Naive thymus-derived CD4-positive, alpha-beta T cell (primary cell): ENCODE measurements at regions of chr5 and their contacts with region 1.

Region 1: DNA sequence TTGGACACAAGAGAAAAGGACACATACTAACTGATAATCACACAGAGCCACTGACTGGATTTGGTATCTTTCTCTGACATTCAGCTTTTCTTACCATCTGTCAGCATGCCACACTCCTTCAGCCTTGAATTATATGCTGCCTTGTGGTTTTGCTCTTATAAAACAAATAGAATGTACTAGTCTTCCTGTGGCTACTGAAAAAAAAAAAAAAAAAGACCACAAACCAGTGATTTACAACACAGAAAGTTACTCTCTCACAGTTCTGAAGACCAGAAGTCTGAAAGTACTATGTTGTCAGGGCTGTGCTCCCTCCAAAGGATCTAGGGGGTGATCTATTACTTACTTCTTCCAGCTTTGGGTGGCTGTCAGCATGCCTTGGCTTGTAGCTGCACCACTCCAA is 82.3 kb downstream of the THBS4 start:
- DNase-seq: no peak
- ATAC-seq: no peak
- H3K4me3 ChIP-seq: no peak overlapping the region
- H3K4me3 Mint-ChIP-seq: peak overlapping the region in 7 of 10 donors; percentile 5 to 65 (median 48)
- H3K27ac ChIP-seq: no peak overlapping the region
- H3K27ac Mint-ChIP-seq: peak overlapping the region in 7 of 9 donors; percentile 29 to 90 (median 71)
- H3K4me1 ChIP-seq: peaks cover 8 to 17% of the 10 kb centered on the region in 2 donors
- H3K4me1 Mint-ChIP-seq: peaks cover 22 to 77% (median 68%) of the 10 kb centered on the region in 7 donors
- H3K27me3 ChIP-seq: no peaks in the 10 kb centered on the region
- H3K27me3 Mint-ChIP-seq: no peaks in the 10 kb centered on the region

Region 2: GRCh38 chr5:80134879-80135278 is 17.4 kb after region 1 on chr5:
- CTCF ChIA-PET with region 1: no interaction called
- POLR2A ChIA-PET with region 1: interaction called, 12 read pairs
- intact Hi-C with region 1: no loop called
- DNase-seq: no peak
- ATAC-seq: no peak
- H3K4me3 ChIP-seq: no peak overlapping the region
- H3K4me3 Mint-ChIP-seq: peak overlapping the region in 8 of 10 donors; percentile 34 to 83 (median 76)
- H3K27ac ChIP-seq: peak overlapping the region; percentile 72
- H3K27ac Mint-ChIP-seq: peak overlapping the region; percentile 83 to 96 (median 92)
- H3K4me1 ChIP-seq: peaks cover 52 to 88% of the 10 kb centered on the region in 2 donors
- H3K4me1 Mint-ChIP-seq: peaks cover 60 to 97% (median 82%) of the 10 kb centered on the region in 7 donors
- H3K27me3 ChIP-seq: no peaks in the 10 kb centered on the region
- H3K27me3 Mint-ChIP-seq: no peaks in the 10 kb centered on the region